MCF 10A (cell line): ENCODE measurements at regions of chr7 and their contacts with region 1.

Region 1: GRCh38 chr7:87886875-87887274 is 10.6 kb downstream of the DBF4 start:
- DNase-seq: peak; percentile 31
- H3K4me3 Mint-ChIP-seq: no peak overlapping the region
- H3K27ac Mint-ChIP-seq: no peak overlapping the region
- H3K4me1 Mint-ChIP-seq: peaks cover 11% of the 10 kb centered on the region
- H3K27me3 Mint-ChIP-seq: no peaks in the 10 kb centered on the region
- CTCF ChIP-seq: peak; percentile 42

Region 2: GRCh38 chr7:87416682-87417587 is 469.9 kb before region 1 on chr7:
- CTCF ChIA-PET with region 1: no interaction called
- POLR2A ChIA-PET with region 1: no interaction called
- intact Hi-C with region 1: loop called (anchors 5 kb)
- DNase-seq: peak; percentile 71
- H3K4me3 Mint-ChIP-seq: no peak overlapping the region
- H3K27ac Mint-ChIP-seq: no peak overlapping the region
- H3K4me1 Mint-ChIP-seq: no peaks in the 10 kb centered on the region
- H3K27me3 Mint-ChIP-seq: peaks cover 10% of the 10 kb centered on the region
- CTCF ChIP-seq: peak; percentile 59

Region 3: DNA sequence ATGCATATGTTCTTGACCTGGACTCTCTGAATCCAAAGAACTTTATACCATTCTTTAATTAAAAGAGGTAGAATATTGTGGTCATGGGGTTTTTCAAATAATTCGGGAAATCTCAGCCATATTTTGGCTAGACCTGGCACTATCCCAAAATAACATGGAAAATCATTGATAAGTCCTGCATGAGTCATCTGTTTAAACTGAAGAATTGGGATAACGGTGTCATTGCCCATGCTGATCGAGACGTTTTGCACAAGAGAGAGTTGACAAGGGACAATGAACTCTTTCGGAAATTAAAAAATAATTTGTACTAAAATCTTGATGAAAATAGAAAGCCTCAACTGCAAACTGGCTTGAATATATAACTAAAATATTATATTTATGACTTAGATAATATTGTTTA is 391.5 kb before region 1 on chr7:
- CTCF ChIA-PET with region 1: no interaction called
- POLR2A ChIA-PET with region 1: no interaction called
- intact Hi-C with region 1: no loop called
- DNase-seq: no peak
- H3K4me3 Mint-ChIP-seq: no peak overlapping the region
- H3K27ac Mint-ChIP-seq: no peak overlapping the region
- H3K4me1 Mint-ChIP-seq: no peaks in the 10 kb centered on the region
- H3K27me3 Mint-ChIP-seq: peaks cover 26% of the 10 kb centered on the region
- CTCF ChIP-seq: no peak

Region 4: DNA sequence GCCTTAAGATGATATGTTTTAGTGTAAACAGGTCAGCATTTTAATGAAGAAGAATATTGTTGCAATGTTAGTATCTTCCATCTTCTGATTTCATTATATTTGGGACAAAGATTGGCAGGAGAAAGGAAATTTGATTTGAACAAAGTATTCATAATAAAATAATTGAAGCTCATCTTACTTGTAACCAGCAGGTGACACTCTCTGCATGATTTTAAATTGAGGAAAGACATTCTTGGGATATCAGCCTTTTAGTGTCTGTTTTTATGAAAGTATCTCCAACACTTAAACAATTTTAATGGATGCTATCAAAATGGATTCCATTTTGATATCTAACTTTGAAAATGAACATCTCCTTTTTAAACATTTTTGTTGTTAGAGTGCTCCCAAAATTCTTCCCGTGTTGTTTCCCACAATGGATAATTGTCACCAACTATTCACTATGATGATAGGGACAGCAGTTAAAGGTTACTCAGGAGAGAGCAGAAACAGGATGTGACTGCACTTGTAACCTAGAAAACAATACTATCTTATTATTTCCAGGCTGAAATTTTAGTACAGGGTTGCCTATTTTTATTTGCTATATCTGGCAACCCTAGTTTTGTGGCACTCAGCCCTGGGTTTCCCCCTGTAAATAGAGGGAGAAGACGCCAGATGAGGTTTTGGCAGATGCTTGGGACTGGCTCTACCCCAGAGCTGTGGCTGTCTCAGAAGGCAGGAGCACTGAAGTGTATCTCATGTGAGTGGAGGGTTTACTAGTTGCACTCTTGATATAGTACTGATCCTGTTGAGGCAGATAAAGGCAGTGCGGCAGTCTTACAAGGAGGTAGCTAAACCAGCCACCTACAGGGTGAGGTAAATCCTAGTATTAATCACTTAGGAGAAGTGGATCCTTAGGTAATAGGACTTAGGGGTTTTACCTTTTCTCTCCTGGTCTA is 380.4 kb before region 1 on chr7:
- CTCF ChIA-PET with region 1: interaction called, 53 read pairs
- POLR2A ChIA-PET with region 1: interaction called, 3 read pairs
- intact Hi-C with region 1: loop called (anchors 2 kb)
- DNase-seq: peak; percentile 27
- H3K4me3 Mint-ChIP-seq: no peak overlapping the region
- H3K27ac Mint-ChIP-seq: no peak overlapping the region
- H3K4me1 Mint-ChIP-seq: no peaks in the 10 kb centered on the region
- H3K27me3 Mint-ChIP-seq: no peaks in the 10 kb centered on the region
- CTCF ChIP-seq: peak; percentile 60

Region 5: GRCh38 chr7:87797798-87798403 is 89.0 kb before region 1 on chr7:
- CTCF ChIA-PET with region 1: interaction called, 28 read pairs
- POLR2A ChIA-PET with region 1: interaction called, 4 read pairs
- intact Hi-C with region 1: loop called (anchors 1 kb)
- DNase-seq: peak; percentile 71
- H3K4me3 Mint-ChIP-seq: no peak overlapping the region
- H3K27ac Mint-ChIP-seq: no peak overlapping the region
- H3K4me1 Mint-ChIP-seq: no peaks in the 10 kb centered on the region
- H3K27me3 Mint-ChIP-seq: peaks cover 2% of the 10 kb centered on the region
- CTCF ChIP-seq: peak; percentile 54

Region 6: GRCh38 chr7:87876040-87876868 is 10.6 kb before region 1 on chr7 and contains the starts of genes DBF4 and SLC25A40:
- CTCF ChIA-PET with region 1: interaction called, 11 read pairs
- POLR2A ChIA-PET with region 1: interaction called, 12 read pairs
- intact Hi-C with region 1: no loop called
- DNase-seq: peak; percentile 95
- H3K4me3 Mint-ChIP-seq: peak within 1 kb of the TSS; percentile 98
- H3K27ac Mint-ChIP-seq: peak within 1 kb of the TSS; percentile 98
- H3K4me1 Mint-ChIP-seq: peaks cover 26% of the 10 kb centered on the region
- H3K27me3 Mint-ChIP-seq: no peaks in the 10 kb centered on the region
- CTCF ChIP-seq: no peak
- total RNA-seq, gene DBF4: 19.0 and 27.4 TPM in 2 replicates
- total RNA-seq, gene SLC25A40: 10.7 and 12.8 TPM in 2 replicates

Region 7: DNA sequence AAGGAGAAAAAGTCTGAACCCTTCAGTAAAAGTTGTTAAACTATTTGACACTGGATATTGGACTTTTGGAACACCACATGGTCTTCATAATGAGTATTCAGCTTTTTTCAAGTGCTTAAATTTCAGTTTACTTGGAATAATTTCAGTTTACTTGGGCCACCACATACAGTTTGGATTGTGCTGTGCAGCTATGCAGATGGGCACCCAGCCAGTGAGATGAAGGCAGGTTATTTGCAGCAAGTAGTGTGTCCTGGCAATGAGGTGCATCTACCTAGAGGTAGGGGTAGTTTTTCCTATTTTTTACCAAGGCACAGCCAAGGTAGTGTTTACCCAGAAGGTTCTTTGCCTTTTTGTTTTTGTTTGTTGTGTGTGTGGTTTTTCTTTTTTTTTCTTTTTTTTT is 23.3 kb after region 1 on chr7:
- CTCF ChIA-PET with region 1: interaction called, 10 read pairs
- POLR2A ChIA-PET with region 1: no interaction called
- intact Hi-C with region 1: no loop called
- DNase-seq: no peak
- H3K4me3 Mint-ChIP-seq: no peak overlapping the region
- H3K27ac Mint-ChIP-seq: no peak overlapping the region
- H3K4me1 Mint-ChIP-seq: no peaks in the 10 kb centered on the region
- H3K27me3 Mint-ChIP-seq: no peaks in the 10 kb centered on the region
- CTCF ChIP-seq: no peak

Region 8: DNA sequence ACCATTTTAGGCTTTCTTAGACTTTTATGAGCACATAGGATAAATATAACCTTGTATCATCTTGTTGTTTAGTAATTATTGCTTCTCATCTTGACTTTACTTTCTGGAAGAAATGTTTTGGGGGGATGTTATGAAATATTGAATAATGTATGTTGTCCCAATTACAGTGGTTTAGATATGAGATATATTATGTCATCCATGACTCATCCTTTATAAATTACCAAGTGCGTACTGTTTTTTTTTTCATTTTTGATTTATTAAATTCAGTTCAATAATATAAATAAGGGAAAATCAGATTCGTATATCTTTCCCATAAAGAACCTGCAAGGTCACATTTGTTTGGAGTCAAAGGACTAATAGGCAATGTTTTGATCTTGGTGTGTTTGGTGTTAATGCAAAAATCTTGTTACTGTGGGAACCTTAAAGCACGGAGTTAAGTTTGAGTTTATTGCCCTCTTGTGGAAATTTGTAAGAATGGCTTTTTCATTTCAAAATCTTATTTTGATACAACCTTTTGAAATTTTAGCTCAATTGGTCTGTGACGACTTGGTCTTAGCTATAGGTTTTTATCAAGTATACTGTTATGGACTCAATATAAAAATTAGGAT is 224.4 kb after region 1 on chr7:
- CTCF ChIA-PET with region 1: interaction called, 5 read pairs
- POLR2A ChIA-PET with region 1: no interaction called
- intact Hi-C with region 1: loop called (anchors 5 kb)
- DNase-seq: peak; percentile 43
- H3K4me3 Mint-ChIP-seq: no peak overlapping the region
- H3K27ac Mint-ChIP-seq: no peak overlapping the region
- H3K4me1 Mint-ChIP-seq: no peaks in the 10 kb centered on the region
- H3K27me3 Mint-ChIP-seq: peaks cover 77% of the 10 kb centered on the region
- CTCF ChIP-seq: peak; percentile 51